ENCODE measurements at regions of chr6 and their contacts with region 1.

Region 1: GRCh38 chr6:20334334-20334733 is 67.3 kb upstream of the E2F3 start:
- DNase-seq: peak; percentile 14
- H3K4me3 Mint-ChIP-seq: no peak overlapping the region
- H3K27ac Mint-ChIP-seq: no peak overlapping the region
- H3K4me1 Mint-ChIP-seq: peaks cover 18% of the 10 kb centered on the region
- H3K27me3 Mint-ChIP-seq: no peaks in the 10 kb centered on the region

Region 2: DNA sequence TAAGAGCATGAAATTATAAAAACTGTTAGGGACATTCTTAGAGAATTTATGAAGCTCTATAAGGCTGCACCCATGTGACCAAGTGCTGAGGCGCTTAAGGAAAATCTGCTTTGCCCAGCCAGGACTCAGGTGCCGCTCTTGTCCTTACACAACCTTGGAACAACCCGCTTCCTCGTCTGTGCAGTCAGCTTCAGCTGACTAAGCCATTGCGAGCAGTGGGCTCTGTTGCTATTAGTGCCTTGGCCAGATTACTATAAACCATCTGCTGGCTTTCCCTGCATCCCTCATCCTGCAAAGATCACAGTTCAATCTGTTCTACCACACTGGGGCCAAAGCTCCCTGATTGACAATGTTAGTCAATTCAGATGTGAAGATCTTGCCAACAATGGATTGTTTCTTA is 21.7 kb before region 1 on chr6:
- CTCF ChIA-PET with region 1: no interaction called
- POLR2A ChIA-PET with region 1: no interaction called
- intact Hi-C with region 1: no loop called
- DNase-seq: no peak
- H3K4me3 Mint-ChIP-seq: no peak overlapping the region
- H3K27ac Mint-ChIP-seq: no peak overlapping the region
- H3K4me1 Mint-ChIP-seq: no peaks in the 10 kb centered on the region
- H3K27me3 Mint-ChIP-seq: peaks cover 2% of the 10 kb centered on the region

Region 3: GRCh38 chr6:20366091-20366832 is 31.9 kb after region 1 on chr6:
- CTCF ChIA-PET with region 1: no interaction called
- POLR2A ChIA-PET with region 1: interaction called, 6 read pairs
- intact Hi-C with region 1: loop called (anchors 2 kb)
- DNase-seq: peak; percentile 45
- H3K4me3 Mint-ChIP-seq: peak overlapping the region; percentile 45
- H3K27ac Mint-ChIP-seq: peak overlapping the region; percentile 83
- H3K4me1 Mint-ChIP-seq: peaks cover 53% of the 10 kb centered on the region
- H3K27me3 Mint-ChIP-seq: no peaks in the 10 kb centered on the region

Region 4: DNA sequence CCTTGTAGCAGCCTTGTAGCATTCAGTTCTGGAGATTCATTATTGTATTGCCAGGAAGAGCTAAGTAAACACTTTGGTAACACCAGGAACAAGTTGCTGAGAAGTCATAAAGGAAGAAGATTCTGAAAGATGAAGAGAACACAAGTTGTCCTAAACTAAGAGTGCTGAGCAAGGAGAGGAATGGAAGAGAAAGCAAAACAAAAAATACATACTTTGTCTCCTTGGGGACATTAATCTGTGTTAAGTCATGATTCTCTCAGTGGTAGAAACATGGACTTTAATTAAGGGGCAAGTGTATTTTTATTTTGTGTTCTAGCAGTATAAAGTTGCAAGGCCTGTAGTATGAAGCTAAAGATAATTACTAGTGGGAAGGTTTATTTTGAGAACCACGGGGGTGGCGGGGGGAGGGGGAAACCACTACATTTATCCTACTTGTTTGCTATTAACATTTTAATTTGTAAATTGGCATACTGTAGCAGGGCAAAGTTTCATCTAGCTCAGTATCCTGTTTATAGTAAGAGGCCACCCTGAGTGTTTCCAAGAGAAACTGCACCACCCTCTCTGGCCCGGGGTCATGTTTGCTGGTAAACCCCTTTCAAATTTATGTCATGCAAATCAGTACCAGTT is 662.9 kb after region 1 on chr6:
- CTCF ChIA-PET with region 1: no interaction called
- POLR2A ChIA-PET with region 1: no interaction called
- intact Hi-C with region 1: no loop called
- DNase-seq: no peak
- H3K4me3 Mint-ChIP-seq: no peak overlapping the region
- H3K27ac Mint-ChIP-seq: no peak overlapping the region
- H3K4me1 Mint-ChIP-seq: no peaks in the 10 kb centered on the region
- H3K27me3 Mint-ChIP-seq: no peaks in the 10 kb centered on the region

Measured in activated CD4-positive, alpha-beta memory T cell treated with anti-CD3 and anti-CD28 coated beads for 36 hours (primary cell).